ENCODE measurements at regions of chr6 and their contacts with region 1.

Region 1: DNA sequence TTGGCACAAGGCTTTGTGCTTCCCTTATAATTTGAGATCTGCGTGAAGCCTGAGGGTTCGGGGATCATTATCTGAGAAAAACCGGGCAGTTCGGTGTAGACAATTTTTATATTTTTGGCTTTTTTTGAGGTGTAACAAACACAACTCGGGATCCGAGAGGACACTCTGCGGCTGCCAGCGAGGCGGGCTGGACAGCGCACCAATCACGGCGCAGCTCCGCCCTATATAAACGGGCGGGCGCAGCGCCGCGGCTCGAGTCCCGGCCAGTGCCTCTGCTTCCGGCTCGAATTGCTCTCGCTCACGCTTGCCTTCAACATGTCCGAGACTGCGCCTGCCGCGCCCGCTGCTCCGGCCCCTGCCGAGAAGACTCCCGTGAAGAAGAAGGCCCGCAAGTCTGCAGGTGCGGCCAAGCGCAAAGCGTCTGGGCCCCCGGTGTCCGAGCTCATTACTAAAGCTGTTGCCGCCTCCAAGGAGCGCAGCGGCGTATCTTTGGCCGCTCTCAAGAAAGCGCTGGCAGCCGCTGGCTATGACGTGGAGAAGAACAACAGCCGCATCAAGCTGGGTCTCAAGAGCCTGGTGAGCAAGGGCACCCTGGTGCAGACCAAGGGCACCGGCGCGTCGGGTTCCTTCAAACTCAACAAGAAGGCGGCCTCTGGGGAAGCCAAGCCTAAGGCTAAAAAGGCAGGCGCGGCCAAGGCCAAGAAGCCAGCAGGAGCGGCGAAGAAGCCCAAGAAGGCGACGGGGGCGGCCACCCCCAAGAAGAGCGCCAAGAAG is 69.0 kb downstream of the HFE start:
- DNase-seq: peak; percentile 98
- H3K4me3 ChIP-seq: peak overlapping the region; percentile 59 to 85 (median 74)
- H3K27ac ChIP-seq: peak overlapping the region; percentile 93 to 98 (median 94)
- H3K4me1 ChIP-seq: peaks cover 17 to 36% (median 30%) of the 10 kb centered on the region in 4 donors
- H3K27me3 ChIP-seq: no peaks in the 10 kb centered on the region
- CTCF ChIP-seq: no peak
- EP300 ChIP-seq: no peak
- POLR2A ChIP-seq: peak; percentile 99

Region 2: GRCh38 chr6:26031595-26032339 is 124.5 kb before region 1 on chr6:
- intact Hi-C with region 1: loop called (anchors 5 kb)
- DNase-seq: peak; percentile 97
- H3K4me3 ChIP-seq: peak overlapping the region; percentile 58 to 69 (median 64)
- H3K27ac ChIP-seq: peak overlapping the region; percentile 86 to 96 (median 91)
- H3K4me1 ChIP-seq: peaks cover 17 to 39% (median 35%) of the 10 kb centered on the region in 4 donors
- H3K27me3 ChIP-seq: no peaks in the 10 kb centered on the region
- CTCF ChIP-seq: peak in 2 of 3 experiments; percentile 9 to 16
- EP300 ChIP-seq: no peak
- POLR2A ChIP-seq: no peak

Region 3: DNA sequence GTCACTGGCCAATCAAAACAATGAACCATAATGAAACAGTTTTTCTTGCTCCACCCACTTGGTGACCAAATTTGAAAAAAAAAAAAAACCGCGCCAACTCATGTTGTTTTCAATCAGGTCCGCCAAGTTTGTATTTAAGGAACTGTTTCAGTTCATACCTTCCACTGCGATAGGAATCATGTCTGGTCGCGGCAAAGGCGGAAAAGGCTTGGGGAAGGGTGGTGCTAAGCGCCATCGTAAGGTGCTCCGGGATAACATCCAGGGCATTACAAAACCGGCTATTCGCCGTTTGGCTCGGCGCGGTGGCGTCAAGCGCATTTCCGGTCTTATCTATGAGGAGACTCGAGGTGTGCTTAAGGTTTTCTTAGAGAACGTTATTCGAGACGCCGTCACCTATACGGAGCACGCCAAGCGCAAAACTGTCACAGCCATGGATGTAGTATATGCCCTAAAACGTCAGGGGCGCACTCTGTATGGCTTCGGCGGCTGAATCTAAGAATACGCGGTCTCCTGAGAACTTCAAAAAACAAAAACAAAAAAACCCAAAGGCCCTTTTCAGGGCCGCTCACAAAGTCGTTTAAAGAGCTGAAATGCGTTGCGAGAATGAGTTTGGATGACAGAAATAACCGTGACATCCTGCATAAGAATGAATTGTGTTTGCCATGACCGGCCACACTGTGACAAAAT is 52.4 kb before region 1 on chr6:
- intact Hi-C with region 1: loop called (anchors 10 kb)
- DNase-seq: peak; percentile 98
- H3K4me3 ChIP-seq: peak overlapping the region; percentile 51 to 62 (median 61)
- H3K27ac ChIP-seq: peak overlapping the region; percentile 83 to 92 (median 91)
- H3K4me1 ChIP-seq: peaks cover 10 to 16% (median 14%) of the 10 kb centered on the region in 4 donors
- H3K27me3 ChIP-seq: no peaks in the 10 kb centered on the region
- CTCF ChIP-seq: peak; percentile 17 to 54 (median 40)
- EP300 ChIP-seq: no peak
- POLR2A ChIP-seq: peak; percentile 96

Region 4: DNA sequence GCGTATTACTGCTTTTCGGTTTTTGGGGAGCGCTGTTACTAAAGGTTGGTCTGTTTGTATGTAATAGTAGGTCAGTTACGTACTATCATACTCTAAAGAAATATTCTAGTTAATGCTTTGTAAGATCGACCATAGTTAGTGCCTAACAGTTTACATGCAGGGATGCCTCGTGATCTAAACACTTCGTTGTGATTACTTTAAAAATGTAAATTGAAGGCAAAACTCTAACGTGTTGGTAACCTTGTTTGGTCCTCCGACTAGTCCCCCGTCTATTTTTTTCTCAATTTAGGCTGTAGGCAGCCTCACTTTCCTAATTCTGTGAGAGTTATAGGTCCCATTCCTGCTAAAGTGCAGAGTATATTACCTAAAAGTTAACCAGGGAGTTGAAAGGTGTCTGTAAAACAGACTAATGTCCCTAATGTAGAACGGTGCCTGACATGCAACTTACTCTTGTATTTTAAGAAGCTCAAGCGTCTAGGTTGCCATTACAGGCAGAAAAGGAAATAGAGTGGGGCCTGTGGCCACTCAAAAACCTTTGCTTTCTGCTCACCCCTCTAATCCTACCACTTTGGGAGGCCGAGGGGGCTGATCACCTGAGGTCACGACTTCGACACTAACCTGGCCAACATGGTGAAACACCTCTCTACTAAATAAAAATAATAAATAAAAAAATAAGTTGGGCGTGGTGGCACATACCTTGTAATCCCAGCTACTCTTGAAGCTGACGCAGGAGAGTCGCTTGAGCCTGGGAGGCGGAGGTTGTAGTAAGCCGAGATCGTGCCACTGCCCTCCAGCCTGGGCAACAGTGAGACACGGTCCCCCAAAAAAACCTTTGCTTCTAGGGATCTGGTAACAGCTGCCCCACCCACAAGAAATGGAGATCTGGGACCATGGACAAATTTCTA is 31.2 kb before region 1 on chr6:
- intact Hi-C with region 1: loop called (anchors 1 kb)
- DNase-seq: no peak
- H3K4me3 ChIP-seq: peak overlapping the region; percentile 80 to 94 (median 87)
- H3K27ac ChIP-seq: peak overlapping the region; percentile 95 to 98 (median 96)
- H3K4me1 ChIP-seq: peaks cover 36 to 45% (median 39%) of the 10 kb centered on the region in 4 donors
- H3K27me3 ChIP-seq: no peaks in the 10 kb centered on the region
- CTCF ChIP-seq: no peak
- EP300 ChIP-seq: no peak
- POLR2A ChIP-seq: peak; percentile 7

Region 5: DNA sequence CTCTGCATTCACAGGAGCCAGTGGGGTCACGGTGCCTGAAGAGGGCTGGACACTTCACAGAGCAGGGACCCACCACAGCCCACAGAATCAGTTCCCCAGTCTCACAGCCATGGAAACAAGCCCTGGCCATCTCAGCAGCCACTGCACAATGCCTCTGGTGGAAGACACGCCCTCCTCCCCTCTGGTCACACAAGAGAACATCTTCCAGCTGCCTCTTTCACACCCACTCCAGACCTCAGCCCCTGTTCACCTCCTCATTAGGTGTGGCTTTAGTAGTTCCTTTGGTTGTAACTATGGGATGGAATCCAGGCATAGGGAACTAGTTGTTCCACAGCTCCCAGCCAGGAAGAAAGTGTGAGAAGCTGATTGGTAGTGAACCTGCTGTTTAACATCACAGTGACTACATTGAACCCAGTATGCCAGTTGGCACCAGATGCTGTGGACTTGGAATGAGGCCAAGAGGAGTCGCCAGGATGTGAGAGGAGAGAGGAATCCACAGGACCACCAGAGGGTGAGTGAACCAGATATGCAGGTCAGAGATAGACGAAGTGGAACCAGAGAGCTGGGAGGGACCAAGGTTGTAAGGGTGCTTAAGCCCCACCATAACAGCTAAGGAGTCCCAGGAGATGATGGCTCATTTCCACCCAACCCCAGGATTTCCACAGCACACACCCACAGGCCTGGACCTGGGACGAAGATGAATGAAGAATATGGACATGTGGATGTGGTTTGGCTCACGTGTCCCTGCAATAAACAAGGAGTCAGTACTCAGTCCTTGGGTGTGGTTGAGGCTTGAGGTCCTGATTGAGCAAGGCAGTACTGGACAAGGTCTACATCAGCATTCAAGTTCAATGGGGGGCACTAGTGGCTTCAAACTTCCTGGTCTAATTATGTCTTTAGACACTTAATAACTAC is 275.3 kb after region 1 on chr6:
- intact Hi-C with region 1: no loop called
- DNase-seq: no peak
- H3K4me3 ChIP-seq: no peak overlapping the region
- H3K27ac ChIP-seq: no peak overlapping the region
- H3K4me1 ChIP-seq: peaks cover 0 to 12% (median 2%) of the 10 kb centered on the region in 4 donors
- H3K27me3 ChIP-seq: no peaks in the 10 kb centered on the region
- CTCF ChIP-seq: no peak
- EP300 ChIP-seq: no peak
- POLR2A ChIP-seq: no peak

Region 6: GRCh38 chr6:26485112-26485780 is 329.0 kb after region 1 on chr6:
- intact Hi-C with region 1: no loop called
- DNase-seq: no peak
- H3K4me3 ChIP-seq: no peak overlapping the region
- H3K27ac ChIP-seq: no peak overlapping the region
- H3K4me1 ChIP-seq: no peaks in the 10 kb centered on the region
- H3K27me3 ChIP-seq: no peaks in the 10 kb centered on the region
- CTCF ChIP-seq: no peak
- EP300 ChIP-seq: no peak
- POLR2A ChIP-seq: no peak

Region 7: DNA sequence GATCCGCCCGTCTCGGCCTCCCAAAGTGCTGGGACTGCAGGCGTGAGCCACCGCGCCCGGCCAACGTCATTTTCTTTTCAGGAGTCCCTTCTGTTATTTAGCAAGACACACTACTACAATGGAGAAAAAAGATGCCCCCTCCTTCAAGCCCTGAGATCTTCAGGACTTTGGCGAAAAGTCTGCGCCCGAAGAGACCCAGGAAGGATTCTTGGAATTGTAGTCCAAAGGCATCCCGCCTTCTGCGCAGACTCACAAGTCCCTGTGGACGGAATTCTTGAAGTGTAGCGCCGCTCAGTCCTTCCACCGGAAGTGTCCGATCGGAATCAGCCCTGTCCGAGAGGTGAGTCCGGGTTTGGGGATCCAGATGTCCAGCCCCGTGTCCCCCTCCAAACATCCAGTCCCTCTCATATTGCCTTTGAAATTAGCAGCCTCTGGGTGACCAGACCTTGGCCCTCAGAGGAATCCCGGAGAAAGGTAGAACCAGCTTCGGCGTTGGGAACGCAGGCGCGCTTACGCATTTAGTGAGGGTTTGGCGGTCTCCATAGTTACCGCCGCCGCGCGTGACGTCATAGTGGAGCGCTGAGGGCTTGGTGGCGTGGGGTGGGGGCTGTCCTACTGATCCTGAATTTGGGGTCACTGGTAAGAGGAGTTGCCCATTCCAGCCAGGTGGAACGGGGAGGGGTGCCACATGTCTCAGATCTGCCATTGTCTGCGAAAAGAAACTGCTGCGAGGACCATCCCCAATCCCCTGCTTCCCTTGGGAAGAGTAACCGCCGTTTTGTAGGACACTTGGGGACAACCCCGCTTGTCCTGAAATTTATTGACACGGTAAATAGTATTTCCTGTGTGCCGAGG is 1924.6 kb after region 1 on chr6:
- intact Hi-C with region 1: loop called (anchors 10 kb)
- DNase-seq: peak; percentile 99
- H3K4me3 ChIP-seq: peak overlapping the region; percentile 69 to 89 (median 74)
- H3K27ac ChIP-seq: peak overlapping the region; percentile 81 to 89 (median 88)
- H3K4me1 ChIP-seq: peaks cover 12% of the 10 kb centered on the region in 4 donors
- H3K27me3 ChIP-seq: no peaks in the 10 kb centered on the region
- CTCF ChIP-seq: no peak
- EP300 ChIP-seq: no peak
- POLR2A ChIP-seq: no peak

Measured in esophagus muscularis mucosa (tissue), 4 donors.